ENCODE measurements at regions of chr11 and their contacts with region 1.

Region 1: DNA sequence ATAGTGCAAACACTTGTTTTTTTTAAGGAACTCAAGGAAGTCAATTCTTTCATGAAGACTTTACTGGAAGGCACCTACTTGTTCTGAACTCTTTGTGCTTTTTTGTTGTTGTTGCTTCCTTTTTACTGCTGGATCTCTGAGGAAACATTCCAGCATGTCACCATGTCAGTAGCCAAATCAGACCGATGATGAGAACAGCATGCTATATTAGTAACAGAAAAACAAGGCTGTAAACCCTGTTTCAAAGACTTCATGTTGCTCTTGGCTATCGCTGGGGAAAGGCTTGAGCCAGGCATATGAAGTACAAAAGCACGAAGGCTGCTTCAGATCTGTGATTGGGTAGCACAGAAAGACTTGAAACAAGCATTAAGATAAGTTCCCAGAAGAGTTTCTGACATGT is 125.6 kb upstream of the SLC5A12 start:
- DNase-seq: no peak
- H3K4me3 ChIP-seq: no peak overlapping the region
- H3K27ac ChIP-seq: no peak overlapping the region
- H3K4me1 ChIP-seq: no peaks in the 10 kb centered on the region
- H3K27me3 ChIP-seq: no peaks in the 10 kb centered on the region
- CTCF ChIP-seq: no peak
- POLR2A ChIP-seq: no peak

Region 2: DNA sequence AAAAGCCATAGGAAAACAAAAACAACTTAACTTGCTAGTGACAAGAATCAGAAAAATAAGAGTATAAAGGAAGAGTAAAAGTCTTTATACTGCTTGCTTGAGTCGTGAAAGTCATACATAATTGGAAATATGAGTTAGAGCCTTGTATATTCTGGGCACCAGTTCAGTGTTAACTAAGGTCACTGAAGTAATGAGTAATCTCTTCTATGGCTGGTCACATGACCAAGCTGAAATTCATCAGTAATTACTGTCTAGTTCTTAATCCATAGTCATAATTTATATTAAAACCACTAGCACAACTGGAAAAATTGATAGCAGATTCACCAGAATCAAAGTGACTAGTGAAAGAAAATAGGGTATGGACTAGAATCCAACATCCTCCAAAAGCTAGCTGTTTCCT is 41.2 kb before region 1 on chr11:
- CTCF ChIA-PET with region 1: no interaction called
- POLR2A ChIA-PET with region 1: no interaction called
- dilution Hi-C with region 1: no loop called
- intact Hi-C with region 1: loop called (anchors 1 kb)
- DNase-seq: no peak
- H3K4me3 ChIP-seq: no peak overlapping the region
- H3K27ac ChIP-seq: no peak overlapping the region
- H3K4me1 ChIP-seq: no peaks in the 10 kb centered on the region
- H3K27me3 ChIP-seq: no peaks in the 10 kb centered on the region
- CTCF ChIP-seq: no peak
- POLR2A ChIP-seq: no peak

Region 3: GRCh38 chr11:27055118-27055557 is 207.7 kb after region 1 on chr11:
- CTCF ChIA-PET with region 1: no interaction called
- POLR2A ChIA-PET with region 1: no interaction called
- dilution Hi-C with region 1: no loop called
- intact Hi-C with region 1: no loop called
- DNase-seq: no peak
- H3K4me3 ChIP-seq: no peak overlapping the region
- H3K27ac ChIP-seq: no peak overlapping the region
- H3K4me1 ChIP-seq: no peaks in the 10 kb centered on the region
- H3K27me3 ChIP-seq: no peaks in the 10 kb centered on the region
- CTCF ChIP-seq: no peak
- POLR2A ChIP-seq: no peak

Measured in endothelial cell of umbilical vein (primary cell).